Adrenal gland (tissue), 19 donors: ENCODE measurements at regions of chr12 and their contacts with region 1.

Region 1: GRCh38 chr12:6195665-6196535 is 4.3 kb upstream of the CD9 start:
- DNase-seq: peak; percentile 84 to 96 (median 91)
- H3K4me3 ChIP-seq: no peak overlapping the region
- H3K27ac ChIP-seq: peak overlapping the region in 3 of 5 donors; percentile 2 to 64 (median 47)
- H3K4me1 ChIP-seq: peaks cover 0 to 18% of the 10 kb centered on the region in 2 donors
- H3K27me3 ChIP-seq: no peaks in the 10 kb centered on the region
- CTCF ChIP-seq: peak; percentile 87 to 98 (median 96)
- POLR2A ChIP-seq: no peak

Region 2: GRCh38 chr12:6062757-6063735 is 132.9 kb before region 1 on chr12:
- intact Hi-C with region 1: loop called in 1 of 2 experiments (anchors 5 kb)
- DNase-seq: peak; percentile 50 to 79 (median 63)
- H3K4me3 ChIP-seq: no peak overlapping the region
- H3K27ac ChIP-seq: no peak overlapping the region
- H3K4me1 ChIP-seq: no peaks in the 10 kb centered on the region
- H3K27me3 ChIP-seq: no peaks in the 10 kb centered on the region
- CTCF ChIP-seq: peak; percentile 79 to 96 (median 90)
- POLR2A ChIP-seq: no peak

Region 3: GRCh38 chr12:6084261-6084968 is 111.5 kb before region 1 on chr12:
- intact Hi-C with region 1: no loop called
- DNase-seq: peak in 3 of 7 donors; percentile 11 to 78 (median 22)
- H3K4me3 ChIP-seq: no peak overlapping the region
- H3K27ac ChIP-seq: peak overlapping the region in 2 of 5 donors; percentile 17 to 25
- H3K4me1 ChIP-seq: peaks cover 0 to 5% of the 10 kb centered on the region in 2 donors
- H3K27me3 ChIP-seq: no peaks in the 10 kb centered on the region
- CTCF ChIP-seq: peak in 1 of 6 experiments; percentile 19
- POLR2A ChIP-seq: no peak

Region 4: GRCh38 chr12:6230321-6231110 is 34.6 kb after region 1 on chr12:
- intact Hi-C with region 1: loop called in 1 of 2 experiments (anchors 5 kb)
- DNase-seq: peak in 6 of 7 donors; percentile 56 to 83 (median 70)
- H3K4me3 ChIP-seq: peak overlapping the region in 1 of 4 donors; percentile 13
- H3K27ac ChIP-seq: peak overlapping the region; percentile 61 to 95 (median 85)
- H3K4me1 ChIP-seq: peaks cover 62 to 100% of the 10 kb centered on the region in 2 donors
- H3K27me3 ChIP-seq: no peaks in the 10 kb centered on the region
- CTCF ChIP-seq: no peak
- POLR2A ChIP-seq: peak in 1 of 2 donors; percentile 13

Region 5: DNA sequence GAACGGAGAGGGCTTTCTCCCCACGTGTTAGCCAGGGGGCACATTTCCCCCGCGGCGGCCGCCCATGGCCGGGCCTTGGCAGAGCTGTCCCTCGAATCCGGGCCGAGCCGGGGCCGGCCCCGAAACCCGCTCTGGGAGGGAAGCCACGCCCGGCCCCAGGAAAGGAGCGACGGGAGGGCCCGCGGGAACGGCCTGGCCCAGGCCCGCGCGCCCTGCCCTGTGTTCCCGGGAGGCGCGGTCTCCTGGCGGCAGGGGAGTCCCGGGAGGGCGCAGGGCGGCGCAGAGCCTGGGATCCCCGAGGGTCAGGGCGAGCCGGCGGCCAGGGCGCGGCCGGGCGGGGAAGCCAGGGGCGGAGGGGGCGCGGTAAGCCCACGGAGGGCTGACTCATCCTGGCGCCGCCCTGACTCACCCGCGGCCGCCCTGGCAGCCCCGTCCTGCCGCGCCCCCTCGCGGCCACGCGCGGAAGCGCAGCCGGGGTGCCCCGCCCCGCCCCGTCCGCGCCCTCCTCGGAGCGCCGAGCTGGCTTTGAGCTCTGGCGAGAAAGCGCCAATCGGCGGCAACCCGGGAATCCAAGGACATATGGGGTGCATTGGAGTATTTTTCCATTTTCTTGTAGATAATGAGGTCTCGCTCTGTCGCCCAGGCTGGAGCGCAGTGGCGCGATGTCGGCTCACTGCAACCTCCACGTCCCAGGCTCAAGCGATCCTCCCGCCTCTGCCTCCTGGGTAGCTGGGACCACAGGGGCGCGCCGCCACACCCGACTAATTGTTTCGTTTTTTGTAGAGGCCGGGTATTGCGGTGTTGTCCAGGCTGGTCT is 82.7 kb after region 1 on chr12:
- intact Hi-C with region 1: loop called in 1 of 2 experiments (anchors 2 kb)
- DNase-seq: peak; percentile 86 to 92 (median 89)
- H3K4me3 ChIP-seq: peak overlapping the region in 2 of 4 donors; percentile 23 to 69
- H3K27ac ChIP-seq: peak overlapping the region; percentile 1 to 92 (median 85)
- H3K4me1 ChIP-seq: peaks cover 17 to 29% of the 10 kb centered on the region in 2 donors
- H3K27me3 ChIP-seq: no peaks in the 10 kb centered on the region
- CTCF ChIP-seq: peak in 5 of 6 experiments; percentile 35 to 100 (median 95)
- POLR2A ChIP-seq: peak in 1 of 2 donors; percentile 60

Region 6: DNA sequence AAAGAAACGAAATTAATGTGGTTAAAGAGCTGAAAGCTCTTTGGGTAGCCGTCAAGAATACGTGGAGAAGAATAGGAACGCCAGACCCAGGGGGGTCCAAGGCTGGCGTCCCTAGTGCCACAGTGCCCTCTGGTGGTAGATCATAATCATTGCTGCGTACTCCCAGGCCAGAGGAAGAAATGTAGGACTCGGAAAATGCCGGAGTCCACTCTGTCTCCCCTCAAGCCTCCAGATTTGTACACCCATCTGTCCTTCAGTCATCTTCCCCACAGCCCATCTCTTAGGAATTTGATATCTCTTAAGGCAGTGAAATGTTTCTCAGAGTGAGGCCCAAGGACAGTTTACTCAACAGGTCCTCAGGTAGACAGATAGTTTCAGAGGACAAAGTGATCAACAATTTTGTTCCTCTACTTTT is 89.2 kb after region 1 on chr12:
- intact Hi-C with region 1: loop called in 1 of 2 experiments (anchors 2 kb)
- DNase-seq: peak; percentile 56 to 84 (median 69)
- H3K4me3 ChIP-seq: no peak overlapping the region
- H3K27ac ChIP-seq: peak overlapping the region in 1 of 5 donors; percentile 58
- H3K4me1 ChIP-seq: peaks cover 4 to 21% of the 10 kb centered on the region in 2 donors
- H3K27me3 ChIP-seq: no peaks in the 10 kb centered on the region
- CTCF ChIP-seq: peak; percentile 86 to 97 (median 94)
- POLR2A ChIP-seq: no peak